ENCODE measurements at regions of chr5 and their contacts with region 1.

Region 1: GRCh38 chr5:39660020-39660419 is 235.2 kb upstream of the DAB2 start:
- DNase-seq: no peak

Region 2: DNA sequence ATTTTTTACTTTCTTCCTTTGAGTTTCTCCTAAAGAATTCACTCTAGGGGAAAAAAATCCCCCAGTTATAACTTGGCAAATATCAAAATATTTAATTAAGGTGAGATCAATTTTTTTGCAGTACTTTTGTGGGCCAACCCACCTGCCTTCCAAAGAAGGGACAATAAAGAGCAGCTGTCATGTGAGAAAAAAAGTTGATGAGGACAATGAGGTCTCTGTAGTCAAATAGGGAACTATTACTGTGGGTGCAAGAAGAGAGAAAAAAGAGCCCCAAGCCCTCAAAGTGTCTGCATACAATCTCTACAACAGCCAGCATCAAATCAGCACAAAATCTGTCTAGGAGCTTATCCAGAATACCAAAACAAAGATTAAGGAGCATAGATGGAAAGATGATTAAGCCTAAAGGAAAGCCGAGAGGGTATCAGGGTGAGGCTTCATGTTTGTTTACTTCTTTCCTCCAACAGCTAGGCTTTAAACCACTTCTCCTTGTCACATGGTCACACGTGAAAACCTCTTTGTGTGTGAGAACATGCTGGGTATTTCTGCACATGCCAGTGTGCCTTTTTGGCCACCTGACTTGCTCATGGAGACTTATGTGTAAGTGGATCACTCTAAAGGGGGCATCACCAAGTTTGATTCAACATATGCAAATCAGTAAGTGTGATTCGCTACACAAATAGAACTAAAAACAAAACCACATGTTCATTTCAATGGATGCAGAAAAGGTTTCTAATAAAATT is 421.5 kb before region 1 on chr5:
- intact Hi-C with region 1: no loop called
- DNase-seq: no peak

Region 3: DNA sequence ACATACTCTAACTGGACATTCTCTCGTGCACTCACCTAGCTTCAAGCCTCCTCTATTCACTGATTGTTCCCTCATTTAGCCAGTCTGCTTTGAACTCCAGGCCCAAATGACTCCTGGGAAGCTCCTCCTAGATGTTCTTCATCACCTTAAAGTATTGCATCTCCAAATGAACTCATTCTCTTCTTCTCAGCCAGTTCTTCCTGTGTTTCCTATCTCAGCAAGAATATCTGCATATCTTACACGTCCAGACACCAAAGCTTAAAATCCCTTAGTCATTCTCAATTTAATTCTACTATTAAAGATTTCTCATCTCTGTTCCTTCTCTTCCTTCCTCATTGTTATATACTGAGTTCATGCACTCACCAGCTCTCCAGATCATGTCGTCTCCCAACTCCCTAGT is 116.7 kb before region 1 on chr5:
- intact Hi-C with region 1: no loop called
- DNase-seq: no peak

Region 4: DNA sequence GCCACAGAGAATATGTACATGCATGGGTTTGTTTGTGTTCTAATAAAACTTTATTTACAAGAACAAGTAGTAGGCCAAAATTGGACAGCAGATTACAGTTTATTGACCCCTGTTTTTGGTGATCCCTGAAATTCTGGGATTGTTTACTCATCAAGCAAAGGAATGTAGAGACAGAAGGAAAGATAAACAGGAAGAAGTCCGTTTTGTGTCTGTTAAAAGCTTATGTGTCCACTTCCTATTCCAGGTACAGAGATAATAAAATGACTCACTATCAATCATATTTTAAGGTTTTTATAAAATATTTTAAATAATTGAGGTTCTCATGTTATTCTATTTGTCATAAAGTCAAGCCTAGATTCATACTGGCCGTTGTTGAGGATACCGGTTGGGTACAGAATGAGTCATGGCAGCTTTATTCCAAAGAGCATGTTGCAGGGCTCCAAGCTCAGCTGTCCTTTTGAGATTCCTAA is 20.4 kb before region 1 on chr5:
- intact Hi-C with region 1: loop called (anchors 1 kb)
- DNase-seq: no peak